Left cardiac atrium (tissue), 4 donors: ENCODE measurements at regions of chrX and their contacts with region 1.

Region 1: DNA sequence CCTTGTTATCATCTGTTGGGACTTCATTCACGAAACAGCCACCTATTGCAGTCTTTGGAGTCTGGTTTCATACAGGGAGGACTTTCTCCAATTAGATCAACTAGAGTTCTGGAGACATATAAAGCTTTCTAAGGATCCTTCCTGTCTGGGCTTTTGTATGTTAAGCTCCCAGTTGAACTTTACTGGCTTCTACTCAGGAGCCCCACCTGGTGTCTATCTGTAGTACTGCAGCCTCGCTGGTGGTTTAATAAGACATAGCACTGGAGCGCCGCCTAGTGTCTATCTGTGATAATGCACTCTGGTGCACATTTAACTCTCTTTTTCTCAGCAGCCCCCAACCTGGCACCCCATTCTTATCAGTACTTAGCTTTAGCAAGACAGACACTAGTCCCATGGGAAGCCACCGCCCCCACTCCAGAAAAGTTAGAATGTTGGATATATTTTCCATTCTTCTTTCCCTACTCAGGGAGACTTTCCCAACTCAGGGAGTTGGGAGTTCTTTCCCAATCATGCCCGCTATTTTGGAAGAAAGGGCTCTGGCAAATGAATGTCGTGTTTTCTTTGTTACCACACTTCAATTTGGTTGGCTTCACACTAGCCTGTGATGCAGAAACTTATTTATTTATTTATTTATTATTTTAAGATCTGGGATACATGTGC is 36.9 kb upstream of the SYTL4 start:
- DNase-seq: peak; percentile 80
- ATAC-seq: peak; percentile 30 to 45

Region 2: DNA sequence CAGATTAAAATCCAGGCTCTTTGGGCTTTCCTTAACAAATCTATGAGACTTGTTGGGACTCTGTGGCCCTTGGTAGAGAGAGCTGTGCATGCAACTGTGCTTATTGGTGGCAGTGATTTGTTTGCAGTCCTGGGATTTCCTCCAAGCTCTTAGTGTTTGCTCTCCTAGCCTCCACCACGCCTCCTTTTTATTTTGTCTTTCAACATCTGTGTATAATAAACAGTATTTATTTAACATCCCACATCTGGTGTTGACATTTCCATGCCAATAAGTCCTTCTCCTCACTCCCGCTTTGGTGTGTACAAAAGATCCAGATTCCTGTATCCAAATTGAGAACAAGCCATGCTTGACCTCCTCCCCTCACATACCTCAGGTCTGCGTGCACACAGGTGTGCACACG is 180.9 kb before region 1 on chrX:
- intact Hi-C with region 1: no loop called
- DNase-seq: no peak
- ATAC-seq: no peak

Region 3: DNA sequence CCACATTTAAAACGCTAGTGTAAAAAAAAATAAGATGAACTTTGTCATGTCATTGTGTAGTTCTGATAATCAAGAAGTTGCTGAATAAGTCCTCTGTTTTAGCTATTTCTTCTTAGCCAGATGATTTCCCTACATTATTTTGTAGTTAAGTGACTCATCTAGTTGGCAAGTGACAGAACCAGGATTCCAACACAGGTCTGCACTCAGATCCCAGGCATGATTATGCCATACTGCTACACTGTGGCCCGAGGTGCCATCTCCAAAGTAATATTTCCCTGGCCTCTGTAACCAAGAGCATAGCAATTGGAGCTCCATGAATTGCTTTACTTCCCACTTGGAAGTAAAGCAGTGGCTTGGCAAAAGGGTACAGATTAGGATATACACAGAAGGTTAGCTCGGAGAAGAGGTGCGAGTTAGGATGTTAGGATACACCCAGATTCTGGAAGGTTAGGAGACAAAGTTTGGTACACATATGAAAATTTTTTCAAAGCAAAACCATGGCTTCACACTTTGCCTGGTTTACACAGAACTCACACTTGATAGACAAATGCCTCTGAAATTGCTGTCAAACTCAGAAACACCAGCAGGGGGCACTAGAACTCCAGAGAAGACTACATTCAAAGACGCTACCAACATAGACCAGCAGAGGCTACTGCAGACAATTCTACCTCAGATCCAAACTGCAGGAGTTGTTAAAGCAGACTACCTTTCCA is 83.4 kb before region 1 on chrX:
- intact Hi-C with region 1: loop called (anchors 2 to 5 kb)
- DNase-seq: peak; percentile 34
- ATAC-seq: peak; percentile 83 to 86